Naive thymus-derived CD4-positive, alpha-beta T cell (primary cell): ENCODE measurements at regions of chr13 and their contacts with region 1.

Region 1: DNA sequence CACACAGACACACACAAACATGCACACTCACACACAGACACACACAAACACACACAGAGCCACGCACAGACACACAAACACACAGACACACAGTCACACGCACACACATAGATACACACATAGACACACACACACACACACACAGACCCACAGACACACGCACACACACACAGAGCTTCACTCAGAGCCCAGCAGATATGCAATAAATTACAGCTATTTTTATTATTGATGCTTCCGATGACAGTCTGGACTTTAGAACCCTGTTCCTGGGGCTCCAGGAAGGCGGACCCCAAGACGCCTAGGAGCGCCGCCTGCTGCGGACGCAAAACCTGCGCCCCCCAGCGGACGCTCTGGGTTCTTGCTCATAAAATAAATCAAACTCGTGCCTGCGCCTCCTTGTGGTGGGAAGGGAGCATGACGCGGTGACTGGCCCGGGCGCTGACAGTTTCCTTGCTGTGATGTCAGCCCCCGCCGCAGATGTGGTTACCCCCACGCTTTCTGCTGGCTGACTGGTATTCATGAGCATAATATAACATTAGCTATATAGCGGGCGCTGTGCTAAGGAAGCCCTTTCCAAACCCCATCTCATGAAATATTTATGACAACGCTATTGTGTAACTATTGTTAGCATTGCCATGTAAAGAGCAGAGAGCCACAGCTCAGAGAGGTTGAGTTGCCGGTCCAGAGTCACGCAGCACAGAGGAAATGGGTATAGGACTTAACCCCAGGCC is 64.4 kb upstream of the TM9SF2 start:
- DNase-seq: peak; percentile 92 to 98 (median 93)
- ATAC-seq: peak; percentile 69
- H3K4me3 ChIP-seq: peak overlapping the region; percentile 39
- H3K4me3 Mint-ChIP-seq: peak overlapping the region; percentile 17 to 79 (median 68)
- H3K27ac ChIP-seq: peak overlapping the region; percentile 83
- H3K27ac Mint-ChIP-seq: peak overlapping the region; percentile 67 to 99 (median 87)
- H3K4me1 ChIP-seq: peaks cover 43 to 48% of the 10 kb centered on the region in 2 donors
- H3K4me1 Mint-ChIP-seq: peaks cover 28 to 68% (median 59%) of the 10 kb centered on the region in 7 donors
- H3K27me3 ChIP-seq: no peaks in the 10 kb centered on the region
- H3K27me3 Mint-ChIP-seq: peaks cover 0 to 30% (median 0%) of the 10 kb centered on the region in 5 donors

Region 2: GRCh38 chr13:98650391-98651107 is 786.3 kb before region 1 on chr13:
- CTCF ChIA-PET with region 1: no interaction called
- POLR2A ChIA-PET with region 1: no interaction called
- intact Hi-C with region 1: no loop called
- DNase-seq: no peak
- ATAC-seq: no peak
- H3K4me3 ChIP-seq: no peak overlapping the region
- H3K4me3 Mint-ChIP-seq: no peak overlapping the region
- H3K27ac ChIP-seq: no peak overlapping the region
- H3K27ac Mint-ChIP-seq: no peak overlapping the region
- H3K4me1 ChIP-seq: no peaks in the 10 kb centered on the region
- H3K4me1 Mint-ChIP-seq: peaks cover 4 to 9% (median 5%) of the 10 kb centered on the region in 7 donors
- H3K27me3 ChIP-seq: no peaks in the 10 kb centered on the region
- H3K27me3 Mint-ChIP-seq: peaks cover 0 to 12% (median 0%) of the 10 kb centered on the region in 5 donors

Region 3: GRCh38 chr13:99214232-99214631 is 222.6 kb before region 1 on chr13:
- CTCF ChIA-PET with region 1: interaction called, 3 read pairs
- POLR2A ChIA-PET with region 1: interaction called, 4 read pairs
- intact Hi-C with region 1: loop called in 1 of 2 experiments (anchors 5 kb)
- DNase-seq: peak in 4 of 9 donors; percentile 34 to 53 (median 46)
- ATAC-seq: no peak
- H3K4me3 ChIP-seq: peak overlapping the region; percentile 53
- H3K4me3 Mint-ChIP-seq: peak overlapping the region; percentile 69 to 95 (median 92)
- H3K27ac ChIP-seq: peak overlapping the region; percentile 85
- H3K27ac Mint-ChIP-seq: peak overlapping the region; percentile 94 to 100 (median 99)
- H3K4me1 ChIP-seq: peaks cover 46 to 67% of the 10 kb centered on the region in 2 donors
- H3K4me1 Mint-ChIP-seq: peaks cover 49 to 93% (median 79%) of the 10 kb centered on the region in 7 donors
- H3K27me3 ChIP-seq: no peaks in the 10 kb centered on the region
- H3K27me3 Mint-ChIP-seq: no peaks in the 10 kb centered on the region

Region 4: GRCh38 chr13:99281811-99282263 is 155.0 kb before region 1 on chr13:
- CTCF ChIA-PET with region 1: interaction called, 35 read pairs
- POLR2A ChIA-PET with region 1: interaction called, 14 read pairs
- intact Hi-C with region 1: no loop called
- DNase-seq: peak in 7 of 9 donors; percentile 45 to 65 (median 55)
- ATAC-seq: peak; percentile 85
- H3K4me3 ChIP-seq: peak overlapping the region; percentile 10
- H3K4me3 Mint-ChIP-seq: peak overlapping the region; percentile 36 to 85 (median 72)
- H3K27ac ChIP-seq: peak overlapping the region; percentile 73
- H3K27ac Mint-ChIP-seq: peak overlapping the region; percentile 86 to 99 (median 97)
- H3K4me1 ChIP-seq: peaks cover 83 to 87% of the 10 kb centered on the region in 2 donors
- H3K4me1 Mint-ChIP-seq: peaks cover 64 to 99% (median 94%) of the 10 kb centered on the region in 7 donors
- H3K27me3 ChIP-seq: no peaks in the 10 kb centered on the region
- H3K27me3 Mint-ChIP-seq: no peaks in the 10 kb centered on the region

Region 5: DNA sequence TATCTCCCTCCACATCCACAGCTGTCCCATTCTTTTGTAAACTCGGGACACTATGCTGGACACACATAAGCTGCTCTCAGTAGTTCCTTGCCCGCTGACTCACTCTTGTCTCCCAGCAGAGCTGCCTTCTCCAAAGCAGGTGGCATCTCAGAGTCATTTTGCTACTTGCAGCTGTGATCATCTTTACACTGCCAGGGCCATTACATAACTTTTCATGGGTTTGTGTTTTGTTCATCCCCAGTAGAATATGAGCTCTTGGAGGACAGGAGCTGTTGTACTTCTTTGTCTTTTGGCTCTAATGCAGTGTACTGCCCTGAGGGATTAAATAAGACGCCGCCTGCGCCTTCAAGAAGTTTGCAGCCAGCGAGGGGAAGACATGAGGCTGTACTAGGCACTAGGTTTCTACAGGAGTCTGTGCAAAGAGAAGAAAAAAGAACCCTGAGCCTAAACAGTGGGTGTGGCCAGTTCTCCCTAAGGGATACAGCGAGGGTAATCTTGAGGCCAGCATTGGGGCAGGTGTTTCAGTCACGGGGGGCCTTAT is 88.9 kb before region 1 on chr13:
- CTCF ChIA-PET with region 1: interaction called, 11 read pairs
- POLR2A ChIA-PET with region 1: interaction called, 21 read pairs
- intact Hi-C with region 1: no loop called
- DNase-seq: no peak
- ATAC-seq: no peak
- H3K4me3 ChIP-seq: no peak overlapping the region
- H3K4me3 Mint-ChIP-seq: peak overlapping the region in 2 of 10 donors; percentile 17 to 48
- H3K27ac ChIP-seq: peak overlapping the region; percentile 41
- H3K27ac Mint-ChIP-seq: peak overlapping the region; percentile 30 to 99 (median 96)
- H3K4me1 ChIP-seq: peaks cover 30 to 36% of the 10 kb centered on the region in 2 donors
- H3K4me1 Mint-ChIP-seq: peaks cover 42 to 98% (median 89%) of the 10 kb centered on the region in 7 donors
- H3K27me3 ChIP-seq: no peaks in the 10 kb centered on the region
- H3K27me3 Mint-ChIP-seq: no peaks in the 10 kb centered on the region

Region 6: GRCh38 chr13:99386911-99387788 is 49.7 kb before region 1 on chr13:
- CTCF ChIA-PET with region 1: interaction called, 173 read pairs
- POLR2A ChIA-PET with region 1: interaction called, 44 read pairs
- intact Hi-C with region 1: loop called (anchors 1 kb)
- DNase-seq: peak; percentile 74 to 89 (median 84)
- ATAC-seq: peak; percentile 65
- H3K4me3 ChIP-seq: no peak overlapping the region
- H3K4me3 Mint-ChIP-seq: peak overlapping the region in 9 of 10 donors; percentile 2 to 73 (median 62)
- H3K27ac ChIP-seq: peak overlapping the region; percentile 85
- H3K27ac Mint-ChIP-seq: peak overlapping the region; percentile 44 to 99 (median 98)
- H3K4me1 ChIP-seq: peaks cover 59 to 65% of the 10 kb centered on the region in 2 donors
- H3K4me1 Mint-ChIP-seq: peaks cover 35 to 83% (median 76%) of the 10 kb centered on the region in 7 donors
- H3K27me3 ChIP-seq: no peaks in the 10 kb centered on the region
- H3K27me3 Mint-ChIP-seq: no peaks in the 10 kb centered on the region

Region 7: GRCh38 chr13:99425485-99426341 is 11.1 kb before region 1 on chr13:
- CTCF ChIA-PET with region 1: interaction called, 95 read pairs
- POLR2A ChIA-PET with region 1: interaction called, 84 read pairs
- intact Hi-C with region 1: loop called (anchors 1 kb)
- DNase-seq: peak in 8 of 9 donors; percentile 41 to 71 (median 62)
- ATAC-seq: peak; percentile 68
- H3K4me3 ChIP-seq: peak overlapping the region; percentile 52
- H3K4me3 Mint-ChIP-seq: peak overlapping the region; percentile 69 to 85 (median 77)
- H3K27ac ChIP-seq: peak overlapping the region; percentile 83
- H3K27ac Mint-ChIP-seq: peak overlapping the region in 8 of 9 donors; percentile 91 to 99 (median 96)
- H3K4me1 ChIP-seq: peaks cover 25 to 59% of the 10 kb centered on the region in 2 donors
- H3K4me1 Mint-ChIP-seq: peaks cover 39 to 74% (median 64%) of the 10 kb centered on the region in 7 donors
- H3K27me3 ChIP-seq: no peaks in the 10 kb centered on the region
- H3K27me3 Mint-ChIP-seq: peaks cover 0 to 4% (median 0%) of the 10 kb centered on the region in 5 donors